Posterior vena cava (tissue), 2 donors: ENCODE measurements at regions of chrX and their contacts with region 1.

Region 1: GRCh38 chrX:147699061-147699460 is 212.7 kb upstream of the FMR1 start:
- DNase-seq: no peak

Region 2: GRCh38 chrX:146224442-146224841 is 1474.6 kb before region 1 on chrX:
- intact Hi-C with region 1: loop called in 1 of 2 experiments (anchors 5 kb)
- DNase-seq: no peak